HepG2 (cell line): ENCODE measurements at regions of chr2 and their contacts with region 1.

Region 1: GRCh38 chr2:121530212-121530705 is 421 bp upstream of the RNU4ATAC start:
- DNase-seq: peak; percentile 87
- ATAC-seq: peak; percentile 91
- H3K4me3 ChIP-seq: peak overlapping the region; percentile 77 to 91 (median 83)
- H3K27ac ChIP-seq: peak overlapping the region; percentile 98
- H3K4me1 ChIP-seq: peaks cover 68% of the 10 kb centered on the region
- H3K27me3 ChIP-seq: no peaks in the 10 kb centered on the region
- CTCF ChIP-seq: no peak
- EP300 ChIP-seq: no peak
- POLR2A ChIP-seq: peak in 1 of 2 experiments; percentile 63; a peak in 2 of 4 replicates
- RAD21 ChIP-seq: no peak; the same call in 1 of the 2 replicates

Region 2: DNA sequence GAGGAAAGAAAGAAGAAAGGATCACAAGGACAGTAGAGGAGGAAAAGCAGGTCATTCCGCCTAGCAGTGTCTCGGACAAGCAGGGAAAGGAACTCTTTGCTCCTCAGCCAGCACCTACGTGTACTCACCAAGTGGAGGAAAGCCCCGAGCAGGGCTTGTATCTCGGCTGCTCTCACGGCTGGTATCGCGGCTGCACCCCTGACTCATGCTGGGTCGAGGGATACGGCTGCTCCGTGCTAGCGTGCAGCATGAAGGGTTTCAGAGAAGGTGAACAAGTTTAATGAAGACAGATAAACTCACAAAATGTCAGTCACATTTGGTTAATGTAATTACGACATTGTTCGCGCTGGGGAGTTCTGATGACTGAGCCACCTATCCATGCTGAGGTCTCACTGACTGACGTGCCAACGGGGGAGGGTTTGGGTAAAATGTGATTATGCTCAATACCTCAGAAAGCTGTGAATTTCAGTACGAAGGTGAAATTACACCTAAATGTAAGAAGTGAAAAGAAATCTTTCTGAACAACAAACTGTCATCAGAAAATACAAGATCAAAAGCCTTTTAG is 111.7 kb before region 1 on chr2:
- CTCF ChIA-PET with region 1: no interaction called
- POLR2A ChIA-PET with region 1: no interaction called
- in situ Hi-C with region 1: no loop called
- intact Hi-C with region 1: no loop called
- DNase-seq: no peak
- ATAC-seq: no peak
- H3K4me3 ChIP-seq: no peak overlapping the region
- H3K27ac ChIP-seq: no peak overlapping the region
- H3K4me1 ChIP-seq: no peaks in the 10 kb centered on the region
- H3K27me3 ChIP-seq: no peaks in the 10 kb centered on the region
- CTCF ChIP-seq: no peak
- EP300 ChIP-seq: no peak
- POLR2A ChIP-seq: no peak
- RAD21 ChIP-seq: no peak

Region 3: DNA sequence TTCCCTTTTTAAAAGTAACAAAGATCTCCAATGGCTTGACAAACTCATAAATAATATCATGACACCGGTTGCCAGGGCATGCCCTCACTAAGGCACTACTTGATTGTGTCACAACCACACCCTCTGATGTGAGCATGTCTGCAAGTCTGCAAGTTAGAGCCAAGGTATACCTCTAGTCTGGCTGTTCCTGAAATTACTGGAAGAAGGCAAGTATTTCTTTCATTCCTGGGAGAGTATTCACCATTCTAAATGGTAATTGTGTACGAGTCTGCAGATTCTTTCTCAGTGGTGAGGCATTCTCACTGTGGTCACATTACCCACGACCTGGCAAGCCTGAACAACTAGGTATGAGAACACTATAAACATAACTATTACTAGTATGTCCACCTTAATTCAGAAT is 25.3 kb before region 1 on chr2:
- CTCF ChIA-PET with region 1: no interaction called
- POLR2A ChIA-PET with region 1: no interaction called
- in situ Hi-C with region 1: no loop called
- intact Hi-C with region 1: no loop called
- DNase-seq: no peak
- ATAC-seq: no peak
- H3K4me3 ChIP-seq: no peak overlapping the region
- H3K27ac ChIP-seq: no peak overlapping the region
- H3K4me1 ChIP-seq: peaks cover 10% of the 10 kb centered on the region; the same call in 1 of the 2 replicates
- H3K27me3 ChIP-seq: no peaks in the 10 kb centered on the region
- CTCF ChIP-seq: no peak
- EP300 ChIP-seq: no peak
- POLR2A ChIP-seq: no peak
- RAD21 ChIP-seq: no peak

Region 4: DNA sequence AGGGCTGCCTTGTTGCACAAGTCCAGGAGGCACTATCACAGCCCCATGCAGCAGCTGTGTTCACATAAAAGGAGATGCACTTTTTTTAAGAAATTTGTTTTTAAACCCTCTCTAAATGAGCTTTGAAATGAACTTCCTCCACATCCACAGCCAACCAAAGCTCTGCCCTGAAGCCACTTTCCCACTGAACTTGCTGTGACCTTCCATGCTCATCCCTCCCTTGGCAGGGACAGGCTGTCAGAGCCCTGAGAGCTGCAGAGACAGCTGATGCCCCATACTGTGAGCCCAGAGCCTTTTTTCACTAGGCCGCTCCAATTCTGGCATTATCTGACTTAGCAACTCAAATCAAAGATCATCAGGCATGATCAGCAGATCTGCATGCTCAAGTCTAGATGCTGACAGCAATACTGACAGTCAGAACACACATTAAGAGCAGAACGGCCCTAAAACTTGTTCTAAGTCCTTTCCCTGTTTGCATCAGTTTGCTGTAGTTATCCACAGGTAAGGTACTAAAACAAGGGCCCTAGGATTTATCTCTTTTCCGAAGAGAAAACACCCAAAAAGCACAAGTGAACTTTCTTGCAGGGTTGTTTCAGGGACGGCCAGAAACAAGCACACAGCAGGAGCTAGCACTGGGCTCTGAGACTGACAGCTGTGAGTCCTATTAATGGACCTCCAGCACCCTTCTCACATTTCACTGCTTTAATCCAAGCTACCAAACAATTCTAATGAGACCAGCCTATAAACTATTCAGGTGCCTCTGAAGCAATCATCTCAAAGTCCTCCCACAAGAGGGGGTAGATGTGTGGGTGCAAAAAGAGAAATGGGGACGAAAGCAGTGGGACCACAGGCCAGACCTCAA is 35.4 kb after region 1 on chr2:
- CTCF ChIA-PET with region 1: no interaction called
- POLR2A ChIA-PET with region 1: interaction called, 18 read pairs
- in situ Hi-C with region 1: no loop called
- intact Hi-C with region 1: loop called (anchors 5 kb)
- DNase-seq: no peak
- ATAC-seq: no peak
- H3K4me3 ChIP-seq: no peak overlapping the region
- H3K27ac ChIP-seq: no peak overlapping the region
- H3K4me1 ChIP-seq: peaks cover 71% of the 10 kb centered on the region
- H3K27me3 ChIP-seq: no peaks in the 10 kb centered on the region
- CTCF ChIP-seq: no peak
- EP300 ChIP-seq: no peak
- POLR2A ChIP-seq: no peak
- RAD21 ChIP-seq: no peak

Region 5: GRCh38 chr2:121640385-121641316 is 110.4 kb after region 1 on chr2:
- CTCF ChIA-PET with region 1: no interaction called
- POLR2A ChIA-PET with region 1: interaction called, 13 read pairs
- in situ Hi-C with region 1: loop called (anchors 5 kb)
- intact Hi-C with region 1: no loop called
- DNase-seq: peak; percentile 50
- ATAC-seq: peak; percentile 86
- H3K4me3 ChIP-seq: no peak overlapping the region
- H3K27ac ChIP-seq: peak overlapping the region; percentile 0
- H3K4me1 ChIP-seq: peaks cover 20% of the 10 kb centered on the region
- H3K27me3 ChIP-seq: no peaks in the 10 kb centered on the region
- CTCF ChIP-seq: peak; percentile 48
- EP300 ChIP-seq: no peak
- POLR2A ChIP-seq: no peak
- RAD21 ChIP-seq: no peak

Region 6: DNA sequence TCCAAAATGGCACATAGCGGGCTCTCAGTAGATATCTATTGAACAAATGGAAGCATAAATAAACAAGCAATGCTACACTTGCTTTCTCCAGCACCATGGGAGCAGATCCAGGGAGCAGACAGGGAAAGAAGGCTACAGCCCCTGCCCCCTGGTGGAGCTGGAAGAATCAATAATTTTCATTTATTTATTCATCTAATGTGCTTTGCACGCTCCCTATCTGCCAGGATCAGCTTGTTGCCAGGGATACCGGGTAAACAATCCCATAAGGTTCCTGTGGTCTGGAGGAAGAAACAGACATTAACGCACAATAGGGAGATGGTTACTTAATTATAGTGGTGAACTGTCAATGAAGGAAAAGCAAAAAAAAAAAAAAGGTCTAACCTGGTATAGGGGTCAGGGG is 159.1 kb after region 1 on chr2:
- CTCF ChIA-PET with region 1: interaction called, 7 read pairs
- POLR2A ChIA-PET with region 1: interaction called, 9 read pairs
- in situ Hi-C with region 1: no loop called
- intact Hi-C with region 1: loop called (anchors 1 kb)
- DNase-seq: peak; percentile 69
- ATAC-seq: peak; percentile 89
- H3K4me3 ChIP-seq: no peak overlapping the region
- H3K27ac ChIP-seq: no peak overlapping the region
- H3K4me1 ChIP-seq: peaks cover 33% of the 10 kb centered on the region
- H3K27me3 ChIP-seq: no peaks in the 10 kb centered on the region
- CTCF ChIP-seq: peak; percentile 59
- EP300 ChIP-seq: no peak
- POLR2A ChIP-seq: no peak
- RAD21 ChIP-seq: peak; percentile 59; the same call in 1 of the 2 replicates

Region 7: GRCh38 chr2:121722479-121722878 is 192.2 kb after region 1 on chr2:
- CTCF ChIA-PET with region 1: interaction called, 9 read pairs
- POLR2A ChIA-PET with region 1: interaction called, 23 read pairs
- in situ Hi-C with region 1: loop called (anchors 5 kb)
- intact Hi-C with region 1: loop called (anchors 1 kb)
- DNase-seq: no peak
- ATAC-seq: peak; percentile 34
- H3K4me3 ChIP-seq: no peak overlapping the region
- H3K27ac ChIP-seq: no peak overlapping the region
- H3K4me1 ChIP-seq: peaks cover 17% of the 10 kb centered on the region
- H3K27me3 ChIP-seq: no peaks in the 10 kb centered on the region
- CTCF ChIP-seq: no peak
- EP300 ChIP-seq: no peak
- POLR2A ChIP-seq: no peak
- RAD21 ChIP-seq: no peak

Region 8: DNA sequence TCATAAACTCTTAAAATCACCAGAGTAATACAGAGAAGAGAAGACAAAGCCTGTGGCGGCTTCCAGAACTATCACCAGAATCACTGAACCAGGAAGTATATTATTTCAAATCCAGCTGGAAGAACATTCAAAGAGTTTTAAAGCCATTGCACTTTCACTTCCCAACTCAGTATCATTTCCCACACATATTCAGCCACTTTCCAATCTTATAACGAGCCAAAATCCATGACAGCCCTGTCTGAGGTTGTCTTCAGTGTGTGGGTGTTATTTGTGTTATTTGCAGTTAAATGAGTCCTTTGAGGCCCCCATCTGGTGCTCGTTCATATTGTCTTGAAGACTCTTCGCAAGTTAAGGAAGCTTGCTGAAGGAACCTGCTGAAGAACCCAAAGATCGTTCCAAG is 785.0 kb after region 1 on chr2:
- CTCF ChIA-PET with region 1: no interaction called
- POLR2A ChIA-PET with region 1: no interaction called
- in situ Hi-C with region 1: no loop called
- intact Hi-C with region 1: no loop called
- DNase-seq: no peak
- ATAC-seq: no peak
- H3K4me3 ChIP-seq: no peak overlapping the region
- H3K27ac ChIP-seq: no peak overlapping the region
- H3K4me1 ChIP-seq: no peaks in the 10 kb centered on the region
- H3K27me3 ChIP-seq: no peaks in the 10 kb centered on the region
- CTCF ChIP-seq: no peak
- EP300 ChIP-seq: no peak
- POLR2A ChIP-seq: no peak
- RAD21 ChIP-seq: no peak